MCF 10A (cell line): ENCODE measurements at regions of chr3 and their contacts with region 1.

Region 1: GRCh38 chr3:127970966-127971592 is 56.0 kb downstream of the KBTBD12 start:
- DNase-seq: peak; percentile 66
- H3K4me3 Mint-ChIP-seq: no peak overlapping the region
- H3K27ac Mint-ChIP-seq: no peak overlapping the region
- H3K4me1 Mint-ChIP-seq: no peaks in the 10 kb centered on the region
- H3K27me3 Mint-ChIP-seq: peaks cover 45% of the 10 kb centered on the region
- CTCF ChIP-seq: peak; percentile 70

Region 2: GRCh38 chr3:127652231-127652995 is 318.7 kb before region 1 on chr3:
- CTCF ChIA-PET with region 1: interaction called, 21 read pairs
- POLR2A ChIA-PET with region 1: no interaction called
- intact Hi-C with region 1: loop called (anchors 1 kb)
- DNase-seq: peak; percentile 63
- H3K4me3 Mint-ChIP-seq: no peak overlapping the region
- H3K27ac Mint-ChIP-seq: no peak overlapping the region
- H3K4me1 Mint-ChIP-seq: peaks cover 7% of the 10 kb centered on the region
- H3K27me3 Mint-ChIP-seq: no peaks in the 10 kb centered on the region
- CTCF ChIP-seq: peak; percentile 96

Region 3: DNA sequence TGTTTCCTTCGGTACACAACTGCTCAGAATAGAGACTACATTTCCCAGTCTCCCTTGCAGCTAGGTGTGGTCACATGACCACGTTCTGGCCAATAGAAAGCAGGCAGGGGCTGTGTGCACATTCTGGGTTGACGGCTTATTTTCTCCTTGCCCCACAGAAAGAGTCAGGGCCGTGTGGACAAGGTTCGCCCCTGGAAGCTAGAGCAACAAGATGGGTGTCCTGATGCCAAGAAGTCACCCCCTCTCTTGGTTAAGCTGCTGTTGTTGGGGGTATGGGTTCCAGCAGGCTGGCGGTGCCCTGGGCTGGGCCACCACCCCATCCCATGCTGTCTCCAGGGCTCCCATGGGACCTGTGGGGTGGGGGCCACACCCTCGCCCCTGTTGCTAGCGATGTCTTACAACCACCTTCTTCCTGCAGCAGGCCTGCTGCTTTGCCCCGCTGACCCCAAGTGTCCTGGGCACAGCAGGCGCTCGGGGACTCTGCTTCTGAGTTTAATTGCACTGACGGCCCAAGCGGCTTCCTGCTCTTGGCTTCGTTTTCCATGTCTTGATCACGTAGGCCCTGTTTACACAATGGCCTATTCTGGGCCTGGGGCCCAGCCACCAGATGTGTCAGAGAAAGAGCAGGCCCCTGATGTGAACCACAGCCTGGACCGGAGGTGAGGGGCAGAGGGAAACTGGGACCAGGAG is 273.4 kb before region 1 on chr3:
- CTCF ChIA-PET with region 1: interaction called, 22 read pairs
- POLR2A ChIA-PET with region 1: no interaction called
- intact Hi-C with region 1: no loop called
- DNase-seq: peak; percentile 78
- H3K4me3 Mint-ChIP-seq: no peak overlapping the region
- H3K27ac Mint-ChIP-seq: peak overlapping the region; percentile 55
- H3K4me1 Mint-ChIP-seq: peaks cover 10% of the 10 kb centered on the region
- H3K27me3 Mint-ChIP-seq: no peaks in the 10 kb centered on the region
- CTCF ChIP-seq: no peak

Region 4: GRCh38 chr3:127817396-127817841 is 153.7 kb before region 1 on chr3:
- CTCF ChIA-PET with region 1: interaction called, 4 read pairs
- POLR2A ChIA-PET with region 1: interaction called, 4 read pairs
- intact Hi-C with region 1: loop called (anchors 2 kb)
- DNase-seq: peak; percentile 92
- H3K4me3 Mint-ChIP-seq: no peak overlapping the region
- H3K27ac Mint-ChIP-seq: peak overlapping the region; percentile 90
- H3K4me1 Mint-ChIP-seq: peaks cover 43% of the 10 kb centered on the region
- H3K27me3 Mint-ChIP-seq: no peaks in the 10 kb centered on the region
- CTCF ChIP-seq: no peak

Region 5: GRCh38 chr3:128155616-128156360 is 184.7 kb after region 1 on chr3:
- CTCF ChIA-PET with region 1: no interaction called
- POLR2A ChIA-PET with region 1: no interaction called
- intact Hi-C with region 1: no loop called
- DNase-seq: no peak
- H3K4me3 Mint-ChIP-seq: no peak overlapping the region
- H3K27ac Mint-ChIP-seq: no peak overlapping the region
- H3K4me1 Mint-ChIP-seq: peaks cover 6% of the 10 kb centered on the region
- H3K27me3 Mint-ChIP-seq: no peaks in the 10 kb centered on the region
- CTCF ChIP-seq: no peak